Activated T-helper 1 cell treated with anti-CD3 and anti-CD28 coated beads, Interleukin-12 subunit alpha, Interleukin-12 subunit beta, Interleukin-2, Interleukin-4 antibody, amounts not matched to agents 30 ng/mL and 10 ng/mL and 1 ng/mL, durations not matched to agents 14 hours and 24 hours and 36 hours (primary cell): ENCODE measurements at regions of chr5 and their contacts with region 1.

Region 1: DNA sequence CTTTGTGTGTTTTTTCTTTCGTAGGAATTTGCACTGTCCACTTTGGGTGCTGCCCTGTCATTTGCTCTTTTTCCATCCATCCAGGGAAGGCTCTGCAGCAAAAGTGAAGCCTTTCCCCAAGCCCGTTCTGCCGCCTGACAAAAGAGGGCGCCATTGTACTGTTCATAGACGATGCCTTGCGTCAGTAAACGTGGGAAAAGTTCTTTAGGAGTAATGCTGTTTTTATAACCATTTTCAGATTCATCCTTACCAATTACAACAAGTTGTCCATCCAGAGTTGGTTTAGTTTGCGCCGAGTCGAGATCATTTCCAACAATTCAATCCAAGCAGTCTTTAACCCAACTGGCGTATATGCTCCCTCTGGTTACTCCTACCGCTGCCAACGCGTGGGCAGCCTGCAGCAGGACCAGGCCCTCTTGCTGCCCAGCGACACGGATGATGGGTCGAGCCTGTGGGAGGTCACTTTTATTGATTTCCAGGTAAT is 34.3 kb upstream of the RPS23 start:
- DNase-seq: peak; percentile 25
- H3K4me3 Mint-ChIP-seq: no peak overlapping the region
- H3K27ac Mint-ChIP-seq: no peak overlapping the region
- H3K4me1 Mint-ChIP-seq: peaks cover 24% of the 10 kb centered on the region
- H3K27me3 Mint-ChIP-seq: no peaks in the 10 kb centered on the region

Region 2: GRCh38 chr5:82421119-82421518 is 108.7 kb after region 1 on chr5:
- intact Hi-C with region 1: no loop called
- DNase-seq: no peak
- H3K4me3 Mint-ChIP-seq: no peak overlapping the region
- H3K27ac Mint-ChIP-seq: no peak overlapping the region
- H3K4me1 Mint-ChIP-seq: peaks cover 6% of the 10 kb centered on the region
- H3K27me3 Mint-ChIP-seq: no peaks in the 10 kb centered on the region

Region 3: GRCh38 chr5:82793808-82794419 is 481.5 kb after region 1 on chr5:
- intact Hi-C with region 1: loop called (anchors 2 kb)
- DNase-seq: no peak
- H3K4me3 Mint-ChIP-seq: no peak overlapping the region
- H3K27ac Mint-ChIP-seq: no peak overlapping the region
- H3K4me1 Mint-ChIP-seq: no peaks in the 10 kb centered on the region
- H3K27me3 Mint-ChIP-seq: peaks cover 6% of the 10 kb centered on the region

Region 4: DNA sequence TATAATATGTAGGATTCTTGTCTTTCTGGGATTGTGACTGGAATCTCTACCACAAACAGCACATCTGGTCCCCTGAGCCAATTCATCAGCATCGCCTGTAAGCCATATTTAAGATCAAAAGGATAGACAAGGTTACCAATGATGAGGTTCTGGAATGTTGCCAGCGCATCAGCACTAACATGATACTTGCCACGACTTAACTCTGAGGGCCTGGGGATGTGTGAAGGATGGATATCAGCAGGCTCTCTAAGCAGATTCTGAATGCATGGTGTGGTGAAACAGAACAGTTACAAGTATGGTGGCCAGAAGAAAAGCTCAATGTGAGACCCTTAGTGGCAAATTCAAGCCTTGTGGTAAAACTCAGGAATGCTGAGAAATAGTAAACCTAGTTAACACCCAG is 907.9 kb after region 1 on chr5:
- intact Hi-C with region 1: no loop called
- DNase-seq: no peak
- H3K4me3 Mint-ChIP-seq: no peak overlapping the region
- H3K27ac Mint-ChIP-seq: no peak overlapping the region
- H3K4me1 Mint-ChIP-seq: no peaks in the 10 kb centered on the region
- H3K27me3 Mint-ChIP-seq: no peaks in the 10 kb centered on the region

Region 5: DNA sequence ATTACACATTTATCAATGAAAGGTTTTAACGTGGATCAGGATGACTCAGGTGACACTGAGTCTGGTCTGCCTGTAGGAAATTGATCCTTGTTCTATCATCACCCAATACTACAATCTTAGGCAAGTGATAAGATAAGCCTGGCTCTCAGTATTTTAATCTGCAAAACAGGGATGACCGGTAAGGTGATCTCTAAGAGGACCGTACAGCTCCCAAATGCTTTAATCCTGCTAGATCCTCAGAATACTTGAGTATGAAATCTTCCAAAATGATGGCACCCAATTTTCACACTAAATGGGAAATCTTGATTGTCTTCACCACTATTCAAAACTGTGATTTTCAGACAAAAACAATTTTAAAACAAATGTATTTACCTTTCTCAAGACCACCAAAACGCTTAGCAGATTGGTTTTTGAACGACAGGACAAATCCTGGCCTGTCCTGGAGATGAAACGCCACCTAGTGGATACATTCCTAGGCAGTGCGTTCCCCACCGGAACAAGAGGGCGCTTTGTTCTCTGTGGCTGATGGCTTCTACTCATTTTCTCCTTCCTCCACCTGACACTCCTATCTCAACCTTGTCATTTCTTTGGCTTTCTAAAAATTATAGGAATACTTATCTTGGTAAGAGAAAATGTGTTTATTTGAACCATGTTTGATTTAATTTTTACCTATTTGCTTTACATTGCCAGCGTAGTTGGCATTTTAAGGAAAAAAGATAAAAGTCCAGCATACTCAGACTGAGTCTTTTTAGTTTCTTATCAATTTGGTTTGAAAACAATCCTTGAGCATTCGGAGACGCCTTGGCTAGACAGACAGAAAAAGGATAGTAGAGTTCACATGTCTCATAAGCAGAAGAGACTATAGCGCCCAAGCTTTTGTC is 1118.0 kb after region 1 on chr5:
- intact Hi-C with region 1: loop called (anchors 1 kb)
- DNase-seq: peak; percentile 38
- H3K4me3 Mint-ChIP-seq: no peak overlapping the region
- H3K27ac Mint-ChIP-seq: no peak overlapping the region
- H3K4me1 Mint-ChIP-seq: no peaks in the 10 kb centered on the region
- H3K27me3 Mint-ChIP-seq: peaks cover 2% of the 10 kb centered on the region

Region 6: DNA sequence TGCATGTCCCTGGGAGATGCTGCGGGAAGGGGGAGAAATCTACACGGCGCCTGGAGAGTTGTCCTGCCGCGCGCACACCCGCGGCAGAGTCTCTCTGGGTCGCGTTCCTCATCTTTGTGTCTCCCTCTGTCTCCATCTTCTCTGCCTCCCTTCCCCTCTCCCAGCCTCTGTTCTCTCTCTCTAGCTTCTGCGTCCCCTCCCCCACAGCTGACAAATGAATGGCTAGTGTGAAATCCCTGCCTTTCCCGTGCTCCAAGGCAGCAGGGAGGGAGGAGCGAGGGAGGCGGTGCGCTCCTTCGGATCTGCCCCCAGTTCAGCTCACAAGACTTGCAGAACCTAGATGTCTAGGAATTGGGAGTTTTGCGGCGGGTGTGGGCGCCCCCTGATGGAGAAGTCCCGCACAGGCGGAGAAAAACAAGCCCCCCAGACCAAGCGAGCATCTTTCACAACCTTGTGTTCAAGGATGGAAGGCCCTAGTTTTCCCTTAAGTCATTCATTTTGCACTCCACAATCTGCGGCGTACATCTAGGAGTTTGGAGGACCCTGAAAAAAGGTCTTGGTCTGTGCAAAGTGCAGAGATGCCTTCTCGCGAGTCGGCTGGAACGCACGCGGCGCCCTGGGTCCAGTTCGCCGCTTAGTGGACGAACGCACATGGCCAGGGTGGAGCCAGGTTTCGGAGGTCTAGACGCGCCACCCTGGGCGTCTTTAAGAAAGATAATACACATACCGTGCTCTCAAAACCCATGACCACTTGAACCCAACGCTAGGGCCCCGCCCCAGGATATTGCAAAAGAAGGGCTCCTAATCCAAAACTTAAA is 1161.1 kb after region 1 on chr5:
- intact Hi-C with region 1: loop called (anchors 1 kb)
- DNase-seq: peak; percentile 45
- H3K4me3 Mint-ChIP-seq: peak overlapping the region; percentile 86
- H3K27ac Mint-ChIP-seq: peak overlapping the region; percentile 78
- H3K4me1 Mint-ChIP-seq: peaks cover 33% of the 10 kb centered on the region
- H3K27me3 Mint-ChIP-seq: peaks cover 72% of the 10 kb centered on the region

Region 7: DNA sequence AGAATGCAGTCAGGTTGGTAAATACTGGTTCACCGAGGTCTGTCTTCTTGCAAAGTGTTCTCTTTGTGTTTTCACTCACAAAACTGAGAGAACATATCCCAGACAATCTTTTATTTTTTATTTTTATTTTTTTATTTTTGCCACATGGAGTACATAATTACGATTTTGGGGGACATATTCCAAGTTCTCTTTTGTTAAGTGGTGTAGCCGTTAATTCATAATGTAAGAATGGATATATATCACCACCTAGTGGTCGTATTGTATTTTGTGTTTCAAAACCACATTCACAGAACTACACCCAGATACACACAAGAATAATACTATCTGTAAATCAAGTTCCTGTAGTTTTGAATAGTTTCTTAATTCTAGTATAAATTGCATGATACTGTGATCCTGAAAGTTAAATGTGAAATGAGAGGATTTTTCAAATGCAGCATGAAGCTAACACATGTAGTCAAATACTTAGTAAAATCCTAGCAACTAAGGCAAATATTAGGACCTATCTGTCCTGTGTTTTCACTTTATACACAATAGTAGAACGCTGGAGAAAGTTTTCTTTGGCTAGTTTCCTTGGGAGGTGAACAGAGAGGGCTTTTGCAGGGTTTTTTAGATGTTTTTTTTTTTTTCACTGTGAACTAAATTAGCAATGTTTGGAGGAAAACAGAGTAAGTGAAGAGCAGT is 1251.8 kb after region 1 on chr5:
- intact Hi-C with region 1: loop called (anchors 1 kb)
- DNase-seq: no peak
- H3K4me3 Mint-ChIP-seq: no peak overlapping the region
- H3K27ac Mint-ChIP-seq: no peak overlapping the region
- H3K4me1 Mint-ChIP-seq: no peaks in the 10 kb centered on the region
- H3K27me3 Mint-ChIP-seq: peaks cover 20% of the 10 kb centered on the region

Region 8: GRCh38 chr5:83712001-83712601 is 1399.7 kb after region 1 on chr5:
- intact Hi-C with region 1: loop called (anchors 2 kb)
- DNase-seq: no peak
- H3K4me3 Mint-ChIP-seq: no peak overlapping the region
- H3K27ac Mint-ChIP-seq: no peak overlapping the region
- H3K4me1 Mint-ChIP-seq: no peaks in the 10 kb centered on the region
- H3K27me3 Mint-ChIP-seq: peaks cover under 1% of the 10 kb centered on the region